IMR-90 (cell line): ENCODE measurements at regions of chr17 and their contacts with region 1.

Region 1: GRCh38 chr17:5249615-5250014 is 15.0 kb upstream of the SCIMP start:
- DNase-seq: peak; percentile 78
- ATAC-seq: peak; percentile 88
- H3K4me3 ChIP-seq: no peak overlapping the region
- H3K27ac ChIP-seq: no peak overlapping the region
- H3K4me1 ChIP-seq: no peaks in the 10 kb centered on the region
- H3K27me3 ChIP-seq: peaks cover 6% of the 10 kb centered on the region
- CTCF ChIP-seq: peak; percentile 66
- POLR2A ChIP-seq: no peak
- RAD21 ChIP-seq: peak; percentile 76

Region 2: GRCh38 chr17:5304636-5305035 is 55.0 kb after region 1 on chr17:
- CTCF ChIA-PET with region 1: no interaction called
- POLR2A ChIA-PET with region 1: no interaction called
- dilution Hi-C with region 1: no loop called
- in situ Hi-C with region 1: no loop called
- intact Hi-C with region 1: loop called (anchors 1 kb)
- DNase-seq: no peak
- ATAC-seq: no peak
- H3K4me3 ChIP-seq: no peak overlapping the region
- H3K27ac ChIP-seq: no peak overlapping the region
- H3K4me1 ChIP-seq: 0 out of 2 replicates have a peak, but pooled peaks cover 2% of the 10 kb centered on the region
- H3K27me3 ChIP-seq: no peaks in the 10 kb centered on the region
- CTCF ChIP-seq: no peak
- POLR2A ChIP-seq: no peak
- RAD21 ChIP-seq: no peak

Region 3: DNA sequence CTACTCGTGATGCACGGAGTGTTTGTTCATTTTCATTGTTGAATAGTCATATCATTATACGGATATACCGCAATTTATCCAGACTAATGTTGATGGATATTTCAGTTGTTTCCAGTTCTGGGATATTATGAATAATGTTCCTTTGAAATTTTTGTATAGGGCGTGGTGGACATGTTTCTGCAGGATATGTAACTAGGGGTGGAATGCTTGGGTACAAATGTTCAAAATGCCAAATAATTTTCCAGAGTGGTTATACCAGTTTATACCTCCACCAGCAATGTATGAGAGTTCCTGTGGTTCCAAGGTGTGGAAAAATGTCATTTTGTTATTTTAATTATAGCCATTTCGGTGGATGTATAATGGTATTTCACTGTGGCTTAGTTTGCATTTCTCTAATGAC is 116.2 kb after region 1 on chr17:
- CTCF ChIA-PET with region 1: no interaction called
- POLR2A ChIA-PET with region 1: no interaction called
- dilution Hi-C with region 1: no loop called
- in situ Hi-C with region 1: no loop called
- intact Hi-C with region 1: loop called (anchors 5 kb)
- DNase-seq: no peak
- ATAC-seq: no peak
- H3K4me3 ChIP-seq: no peak overlapping the region
- H3K27ac ChIP-seq: no peak overlapping the region
- H3K4me1 ChIP-seq: peaks cover 9% of the 10 kb centered on the region; the same call in 1 of the 2 replicates
- H3K27me3 ChIP-seq: no peaks in the 10 kb centered on the region
- CTCF ChIP-seq: no peak
- POLR2A ChIP-seq: no peak
- RAD21 ChIP-seq: no peak

Region 4: GRCh38 chr17:5419356-5419958 is 169.8 kb after region 1 on chr17 and contains the start of gene NUP88:
- CTCF ChIA-PET with region 1: no interaction called
- POLR2A ChIA-PET with region 1: no interaction called
- dilution Hi-C with region 1: no loop called
- in situ Hi-C with region 1: no loop called
- intact Hi-C with region 1: loop called (anchors 1 kb)
- DNase-seq: peak; percentile 97
- ATAC-seq: peak; percentile 96
- H3K4me3 ChIP-seq: peak within 1 kb of the TSS; percentile 76
- H3K27ac ChIP-seq: peak within 1 kb of the TSS; percentile 80
- H3K4me1 ChIP-seq: peaks cover 2% of the 10 kb centered on the region
- H3K27me3 ChIP-seq: no peaks in the 10 kb centered on the region
- CTCF ChIP-seq: no peak
- POLR2A ChIP-seq: peak; percentile 94
- RAD21 ChIP-seq: no peak
- total RNA-seq, gene NUP88: 80.5 and 83.7 TPM in 2 replicates

Region 5: DNA sequence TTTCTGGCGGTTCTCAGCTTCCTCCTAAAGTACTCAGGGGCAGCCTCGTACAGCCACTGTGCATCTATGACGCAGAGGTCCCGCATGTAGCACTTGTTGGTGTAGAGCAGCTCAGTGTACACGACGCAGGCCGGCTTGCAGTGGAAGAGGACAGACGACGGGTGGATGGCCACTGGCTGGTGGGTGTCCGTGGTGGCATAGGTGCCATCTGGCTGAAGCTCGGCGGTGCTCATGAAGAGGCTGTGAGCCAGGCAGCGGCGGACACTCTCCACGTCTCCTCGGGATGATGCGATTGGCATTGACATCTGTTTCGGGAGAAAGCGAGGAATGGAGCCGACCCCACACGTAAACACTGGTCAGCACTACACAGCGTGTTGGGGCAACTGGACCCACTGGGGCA is 194.6 kb after region 1 on chr17:
- CTCF ChIA-PET with region 1: interaction called, 3 read pairs
- POLR2A ChIA-PET with region 1: no interaction called
- dilution Hi-C with region 1: no loop called
- in situ Hi-C with region 1: loop called (anchors 5 kb)
- intact Hi-C with region 1: no loop called
- DNase-seq: no peak
- ATAC-seq: no peak
- H3K4me3 ChIP-seq: no peak overlapping the region
- H3K27ac ChIP-seq: no peak overlapping the region
- H3K4me1 ChIP-seq: no peaks in the 10 kb centered on the region
- H3K27me3 ChIP-seq: no peaks in the 10 kb centered on the region
- CTCF ChIP-seq: no peak
- POLR2A ChIP-seq: no peak
- RAD21 ChIP-seq: no peak

Region 6: DNA sequence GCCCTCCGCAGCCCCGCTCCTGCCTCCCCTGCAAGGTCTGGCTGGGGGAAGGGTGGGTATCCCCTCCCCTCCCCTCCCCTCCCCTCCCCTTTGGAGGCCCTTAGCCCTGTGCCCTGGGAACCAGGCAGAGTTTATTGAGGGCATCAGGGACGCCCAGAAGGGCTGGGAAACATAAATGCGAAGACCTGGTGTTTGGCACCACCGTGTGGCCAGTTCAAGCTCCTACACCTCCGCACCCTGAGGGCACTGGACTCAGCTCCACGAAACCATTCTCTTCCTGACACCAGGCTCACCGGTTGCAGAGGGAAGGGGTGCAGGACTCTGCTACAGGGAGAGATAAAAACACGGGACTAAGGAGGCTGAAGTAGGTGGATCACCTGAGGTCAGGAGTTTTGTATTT is 1186.4 kb after region 1 on chr17:
- CTCF ChIA-PET with region 1: no interaction called
- POLR2A ChIA-PET with region 1: no interaction called
- dilution Hi-C with region 1: no loop called
- in situ Hi-C with region 1: loop called (anchors 25 kb)
- intact Hi-C with region 1: loop called (anchors 10 kb)
- DNase-seq: peak; percentile 61
- ATAC-seq: peak; percentile 99
- H3K4me3 ChIP-seq: no peak overlapping the region
- H3K27ac ChIP-seq: no peak overlapping the region
- H3K4me1 ChIP-seq: no peaks in the 10 kb centered on the region
- H3K27me3 ChIP-seq: peaks cover 10% of the 10 kb centered on the region
- CTCF ChIP-seq: peak; percentile 78
- POLR2A ChIP-seq: no peak
- RAD21 ChIP-seq: peak; percentile 81

Region 7: DNA sequence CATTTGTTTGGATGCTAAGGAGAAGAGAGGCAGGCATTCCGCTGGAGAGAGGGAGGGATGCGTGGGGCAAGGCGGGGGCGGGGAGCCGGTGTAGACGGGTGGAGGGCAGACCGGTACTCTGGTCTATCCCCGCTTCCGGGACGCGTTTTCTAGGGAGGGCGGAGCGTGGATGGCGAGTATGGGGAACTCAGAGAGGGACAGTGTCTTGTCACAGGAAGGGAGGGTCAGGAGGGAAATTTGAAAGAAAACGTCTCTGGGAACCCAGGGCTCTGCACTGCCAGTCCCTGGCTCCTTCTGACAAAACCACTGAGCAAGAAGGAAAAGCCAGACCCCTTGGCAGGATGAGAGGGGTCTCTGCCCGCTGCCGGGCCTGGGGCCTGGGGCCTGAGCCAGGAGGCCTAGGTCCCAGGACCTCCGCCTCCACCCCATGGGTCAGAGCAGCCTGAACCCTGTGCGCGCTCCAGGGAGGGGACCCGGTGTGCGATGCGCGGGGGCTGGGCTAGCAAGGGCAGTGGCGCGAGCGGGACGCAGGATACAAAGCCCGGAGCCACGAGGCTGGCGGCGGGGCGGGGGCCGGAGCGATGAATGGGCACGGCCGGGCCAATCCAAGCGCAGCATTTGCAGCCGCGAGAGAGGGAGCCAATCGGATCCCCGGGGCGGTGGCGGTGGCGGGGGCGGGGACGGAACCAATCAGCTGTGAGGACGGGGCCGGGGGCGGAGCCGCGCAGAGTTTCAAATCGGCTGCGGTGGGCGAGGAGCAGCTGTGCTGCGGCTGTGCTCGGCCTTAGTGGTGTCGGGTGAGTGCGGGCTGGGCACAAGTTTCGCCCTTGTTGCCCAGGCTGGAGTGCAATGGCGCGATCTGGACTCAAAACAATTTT is 1194.3 kb after region 1 on chr17 and contains the start of gene PIMREG:
- CTCF ChIA-PET with region 1: no interaction called
- POLR2A ChIA-PET with region 1: no interaction called
- dilution Hi-C with region 1: no loop called
- in situ Hi-C with region 1: loop called (anchors 25 kb)
- intact Hi-C with region 1: loop called (anchors 10 kb)
- DNase-seq: peak; percentile 88
- ATAC-seq: peak; percentile 97
- H3K4me3 ChIP-seq: peak within 1 kb of the TSS; percentile 57
- H3K27ac ChIP-seq: peak within 1 kb of the TSS; percentile 76
- H3K4me1 ChIP-seq: peaks cover 3% of the 10 kb centered on the region; the same call in 1 of the 2 replicates
- H3K27me3 ChIP-seq: no peaks in the 10 kb centered on the region
- CTCF ChIP-seq: no peak
- POLR2A ChIP-seq: 0 out of 2 replicates have a peak, but pooled peaks have one; percentile 40
- RAD21 ChIP-seq: no peak
- total RNA-seq, gene PIMREG: 19.4 and 21.5 TPM in 2 replicates